Aorta (tissue), 5 donors: ENCODE measurements at regions of chr21 and their contacts with region 1.

Region 1: GRCh38 chr21:41612674-41613532 is 104.9 kb upstream of the TMPRSS2 start:
- DNase-seq: peak; percentile 94 to 95
- ATAC-seq: peak; percentile 93
- H3K4me3 ChIP-seq: no peak overlapping the region
- H3K27ac ChIP-seq: peak overlapping the region; percentile 71 to 91
- H3K4me1 ChIP-seq: peaks cover 2 to 7% of the 10 kb centered on the region in 2 donors
- H3K27me3 ChIP-seq: no peaks in the 10 kb centered on the region

Region 2: DNA sequence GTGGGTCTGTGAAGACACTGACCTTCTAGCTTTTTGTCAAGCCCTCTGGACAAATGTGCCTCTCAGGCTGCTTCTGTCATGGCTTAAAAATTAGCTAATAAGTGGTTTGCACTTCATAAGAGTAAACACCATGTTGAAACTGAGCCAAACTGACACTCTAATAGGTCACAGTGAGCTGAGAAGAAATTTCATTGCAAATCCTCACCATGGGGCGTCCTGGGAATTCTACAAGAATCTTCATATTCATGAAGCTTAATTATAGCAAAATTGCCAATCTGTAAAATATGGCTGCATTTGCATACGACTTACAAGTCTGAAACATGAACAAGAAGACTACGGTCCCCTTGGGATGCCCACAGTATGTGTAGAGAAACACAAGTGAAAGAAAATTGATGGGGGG is 954.6 kb before region 1 on chr21:
- intact Hi-C with region 1: no loop called
- DNase-seq: no peak
- ATAC-seq: no peak
- H3K4me3 ChIP-seq: no peak overlapping the region
- H3K27ac ChIP-seq: no peak overlapping the region
- H3K4me1 ChIP-seq: no peaks in the 10 kb centered on the region
- H3K27me3 ChIP-seq: no peaks in the 10 kb centered on the region

Region 3: GRCh38 chr21:41663801-41664788 is 51.2 kb after region 1 on chr21:
- intact Hi-C with region 1: loop called (anchors 1 to 5 kb)
- DNase-seq: no peak
- ATAC-seq: no peak
- H3K4me3 ChIP-seq: no peak overlapping the region
- H3K27ac ChIP-seq: no peak overlapping the region
- H3K4me1 ChIP-seq: peaks cover 0 to 2% of the 10 kb centered on the region in 2 donors
- H3K27me3 ChIP-seq: no peaks in the 10 kb centered on the region

Region 4: GRCh38 chr21:41768437-41769061 is 155.6 kb after region 1 on chr21:
- intact Hi-C with region 1: loop called in 1 of 2 experiments (anchors 2 kb)
- DNase-seq: peak in 1 of 2 donors; percentile 75
- ATAC-seq: no peak
- H3K4me3 ChIP-seq: peak overlapping the region; percentile 12 to 57
- H3K27ac ChIP-seq: peak overlapping the region in 1 of 2 donors; percentile 60
- H3K4me1 ChIP-seq: no peaks in the 10 kb centered on the region
- H3K27me3 ChIP-seq: no peaks in the 10 kb centered on the region

Region 5: DNA sequence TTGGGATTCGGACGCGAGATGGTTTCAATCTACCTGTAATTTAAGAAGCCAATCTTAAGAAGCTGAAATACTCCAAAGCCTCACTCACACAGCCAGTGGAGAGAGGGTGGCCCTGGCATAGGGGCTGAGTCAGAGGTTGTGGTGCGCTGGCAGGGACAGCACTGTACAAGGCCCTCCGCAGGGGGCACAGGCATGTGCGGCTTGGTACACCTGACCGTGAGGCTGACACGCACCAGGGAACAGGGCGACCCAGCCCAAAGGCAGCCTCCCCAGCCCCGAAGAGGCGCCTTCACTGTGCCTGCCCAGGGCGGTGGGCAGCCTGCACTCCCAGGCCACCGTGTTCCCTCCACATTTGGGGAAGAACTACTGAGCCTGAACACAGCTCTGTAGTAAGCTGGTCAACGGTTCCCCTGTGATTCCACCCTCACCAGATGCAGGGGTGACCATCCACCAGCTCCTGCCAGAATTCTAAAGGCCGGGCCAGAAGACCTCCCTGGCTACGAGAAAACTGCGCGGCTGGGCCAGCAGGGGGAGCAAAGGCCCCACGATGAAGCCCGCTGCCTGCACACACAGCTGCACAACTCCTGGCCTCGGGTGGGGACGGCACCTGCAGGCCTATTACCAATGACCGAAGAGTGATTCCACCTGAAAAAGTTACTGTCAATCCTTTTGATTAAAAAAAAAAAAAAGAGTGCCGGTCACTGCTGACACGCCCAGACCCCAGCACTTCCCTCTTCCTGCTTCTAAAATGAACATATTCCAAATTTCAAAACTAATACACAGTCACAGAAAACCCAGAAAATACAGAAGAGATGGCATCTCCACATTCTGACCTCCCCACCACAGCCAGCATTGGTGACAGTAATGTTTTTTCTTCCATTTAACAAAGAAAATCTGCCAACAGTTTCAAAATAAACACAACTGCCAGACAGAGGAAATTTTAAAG is 203.6 kb after region 1 on chr21:
- intact Hi-C with region 1: loop called (anchors 1 to 2 kb)
- DNase-seq: peak; percentile 74 to 85
- ATAC-seq: peak; percentile 85
- H3K4me3 ChIP-seq: no peak overlapping the region
- H3K27ac ChIP-seq: no peak overlapping the region
- H3K4me1 ChIP-seq: no peaks in the 10 kb centered on the region
- H3K27me3 ChIP-seq: no peaks in the 10 kb centered on the region

Region 6: GRCh38 chr21:42097860-42098454 is 485.1 kb after region 1 on chr21:
- intact Hi-C with region 1: loop called in 1 of 2 experiments (anchors 10 kb)
- DNase-seq: peak in 1 of 2 donors; percentile 89
- ATAC-seq: peak; percentile 81
- H3K4me3 ChIP-seq: no peak overlapping the region
- H3K27ac ChIP-seq: peak overlapping the region; percentile 85 to 91
- H3K4me1 ChIP-seq: peaks cover 5 to 8% of the 10 kb centered on the region in 2 donors
- H3K27me3 ChIP-seq: no peaks in the 10 kb centered on the region